ENCODE measurements at regions of chr18 and their contacts with region 1.

Region 1: GRCh38 chr18:75984853-75985252 is 510.2 kb downstream of the ZNF516 start:
- DNase-seq: no peak
- ATAC-seq: no peak
- H3K4me3 ChIP-seq: no peak overlapping the region
- H3K27ac ChIP-seq: no peak overlapping the region
- H3K4me1 ChIP-seq: no peaks in the 10 kb centered on the region
- H3K27me3 ChIP-seq: no peaks in the 10 kb centered on the region
- CTCF ChIP-seq: no peak

Region 2: DNA sequence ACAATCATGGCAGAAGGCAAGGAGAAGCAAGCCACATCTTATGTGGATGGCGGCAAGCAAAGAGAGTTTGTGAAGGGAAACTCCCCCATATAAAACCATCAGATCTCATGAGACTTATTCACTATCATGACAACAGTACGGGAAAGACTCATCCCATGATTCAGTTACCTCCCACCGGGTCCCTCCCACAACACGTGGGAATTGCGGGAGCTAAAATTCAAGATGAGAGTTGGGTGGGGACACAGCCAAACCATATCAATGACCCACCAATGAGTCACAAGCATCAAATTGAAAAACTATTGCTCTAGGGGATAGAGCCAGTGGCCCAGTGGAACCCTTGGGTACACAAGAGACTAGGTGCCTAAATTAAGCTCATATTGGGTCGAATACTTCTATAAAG is 1994.6 kb before region 1 on chr18:
- intact Hi-C with region 1: loop called in 1 of 2 experiments (anchors 10 kb)
- DNase-seq: no peak
- ATAC-seq: no peak
- H3K4me3 ChIP-seq: no peak overlapping the region
- H3K27ac ChIP-seq: no peak overlapping the region
- H3K4me1 ChIP-seq: no peaks in the 10 kb centered on the region
- H3K27me3 ChIP-seq: no peaks in the 10 kb centered on the region
- CTCF ChIP-seq: no peak